ENCODE measurements at regions of chr6 and their contacts with region 1.

Region 1: DNA sequence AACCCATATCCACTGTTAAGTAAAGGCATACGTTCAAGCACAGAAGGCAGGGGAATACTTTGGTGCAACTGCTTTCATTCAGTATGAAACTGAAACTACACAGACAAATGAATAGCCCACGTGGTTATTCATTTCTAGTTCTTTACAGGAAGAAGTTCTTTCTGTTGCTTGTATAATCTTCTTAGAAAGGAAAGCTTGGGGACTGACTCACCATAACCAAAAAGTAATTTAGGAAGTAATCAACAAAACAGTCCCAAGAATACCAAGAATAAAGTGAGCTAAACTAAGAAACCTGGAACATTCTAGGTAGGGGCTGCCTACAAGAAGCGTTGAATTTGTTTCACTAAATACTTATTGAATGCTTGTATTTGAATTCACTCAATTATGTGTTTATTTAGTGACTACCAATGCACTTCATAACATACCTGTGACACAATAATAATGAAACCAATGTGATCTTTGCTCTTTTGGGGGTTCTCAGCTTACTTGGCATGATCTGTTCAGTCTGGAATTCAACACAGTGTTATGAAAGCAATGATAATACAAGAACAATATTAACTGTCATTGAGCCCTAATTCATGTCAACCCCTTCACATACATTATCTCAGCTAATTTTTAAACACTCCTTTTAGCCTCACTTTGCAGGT is 25.1 kb upstream of the KIAA0408 start:
- DNase-seq: peak; percentile 14
- H3K4me3 Mint-ChIP-seq: peak overlapping the region; percentile 73
- H3K27ac Mint-ChIP-seq: peak overlapping the region; percentile 68
- H3K4me1 Mint-ChIP-seq: peaks cover 68% of the 10 kb centered on the region
- H3K27me3 Mint-ChIP-seq: no peaks in the 10 kb centered on the region

Region 2: GRCh38 chr6:127266178-127266891 is 218.0 kb before region 1 on chr6 and contains the start of gene RNF146:
- intact Hi-C with region 1: loop called (anchors 1 kb)
- DNase-seq: peak; percentile 63
- H3K4me3 Mint-ChIP-seq: peak within 1 kb of the TSS; percentile 100
- H3K27ac Mint-ChIP-seq: peak within 1 kb of the TSS; percentile 100
- H3K4me1 Mint-ChIP-seq: peaks cover 42% of the 10 kb centered on the region
- H3K27me3 Mint-ChIP-seq: peaks cover 9% of the 10 kb centered on the region
- total RNA-seq, gene RNF146: 18.3 and 20.5 TPM in 2 replicates

Region 3: DNA sequence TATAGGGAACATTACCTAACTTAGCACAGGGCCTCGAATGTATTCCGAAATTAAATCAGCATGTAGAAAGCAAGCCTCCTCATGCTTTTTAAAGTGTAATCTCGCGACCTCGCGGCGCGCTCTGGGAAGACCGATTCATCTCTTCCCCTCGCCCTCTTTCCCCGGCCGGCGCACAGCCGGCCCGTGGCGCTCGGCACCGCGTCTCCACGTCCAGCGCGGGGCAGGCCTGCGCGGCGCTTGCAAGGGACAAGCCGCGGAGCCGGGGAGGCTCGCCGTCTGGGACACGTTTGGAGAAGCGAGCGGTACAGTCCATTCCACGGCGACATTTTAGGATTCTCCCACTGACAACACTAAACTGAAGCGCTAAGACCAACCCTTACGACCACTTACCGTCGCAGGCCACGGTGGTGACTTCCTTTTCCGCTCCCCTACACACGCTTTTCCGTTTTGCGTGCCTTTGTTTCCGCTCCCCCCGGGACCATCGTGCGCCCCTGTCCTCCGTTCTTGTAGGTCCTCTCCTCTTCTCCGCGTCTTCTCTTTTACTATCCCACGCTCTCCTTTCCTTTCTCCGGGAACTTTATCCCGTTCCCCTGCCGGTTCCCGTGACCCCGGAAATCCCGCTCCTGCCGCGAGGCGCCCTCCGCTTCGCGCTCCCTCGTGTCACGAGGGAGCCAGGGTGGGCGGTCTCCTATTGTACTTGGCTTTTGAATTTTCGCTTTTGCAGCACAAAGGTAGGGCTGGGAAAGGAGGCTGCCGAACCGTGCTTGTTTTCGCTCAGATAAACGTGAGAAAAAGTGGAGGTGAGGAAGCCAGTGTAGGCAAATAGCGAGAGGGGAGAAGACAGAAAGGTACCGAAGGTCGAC is 141.2 kb before region 1 on chr6 and contains the start of gene ECHDC1:
- intact Hi-C with region 1: loop called (anchors 1 kb)
- DNase-seq: peak; percentile 63
- H3K4me3 Mint-ChIP-seq: no peak within 1 kb of the TSS
- H3K27ac Mint-ChIP-seq: no peak within 1 kb of the TSS
- H3K4me1 Mint-ChIP-seq: peaks cover 12% of the 10 kb centered on the region
- H3K27me3 Mint-ChIP-seq: no peaks in the 10 kb centered on the region
- total RNA-seq, gene ECHDC1: 57.4 and 61.8 TPM in 2 replicates

Region 4: GRCh38 chr6:127516666-127517273 is 32.4 kb after region 1 on chr6:
- intact Hi-C with region 1: loop called (anchors 1 kb)
- DNase-seq: peak; percentile 48
- H3K4me3 Mint-ChIP-seq: peak overlapping the region; percentile 90
- H3K27ac Mint-ChIP-seq: peak overlapping the region; percentile 70
- H3K4me1 Mint-ChIP-seq: peaks cover 54% of the 10 kb centered on the region
- H3K27me3 Mint-ChIP-seq: peaks cover 14% of the 10 kb centered on the region

Region 5: GRCh38 chr6:127893541-127893940 is 409.2 kb after region 1 on chr6:
- intact Hi-C with region 1: loop called (anchors 10 kb)
- DNase-seq: no peak
- H3K4me3 Mint-ChIP-seq: peak overlapping the region; percentile 83
- H3K27ac Mint-ChIP-seq: peak overlapping the region; percentile 93
- H3K4me1 Mint-ChIP-seq: peaks cover 54% of the 10 kb centered on the region
- H3K27me3 Mint-ChIP-seq: no peaks in the 10 kb centered on the region

Measured in activated T-helper 1 cell treated with anti-CD3 and anti-CD28 coated beads, Interleukin-12 subunit alpha, Interleukin-12 subunit beta, Interleukin-2, Interleukin-4 antibody, amounts not matched to agents 30 ng/mL and 10 ng/mL and 1 ng/mL, durations not matched to agents 14 hours and 24 hours and 36 hours (primary cell).